ENCODE measurements at regions of chr16 and their contacts with region 1.

Region 1: DNA sequence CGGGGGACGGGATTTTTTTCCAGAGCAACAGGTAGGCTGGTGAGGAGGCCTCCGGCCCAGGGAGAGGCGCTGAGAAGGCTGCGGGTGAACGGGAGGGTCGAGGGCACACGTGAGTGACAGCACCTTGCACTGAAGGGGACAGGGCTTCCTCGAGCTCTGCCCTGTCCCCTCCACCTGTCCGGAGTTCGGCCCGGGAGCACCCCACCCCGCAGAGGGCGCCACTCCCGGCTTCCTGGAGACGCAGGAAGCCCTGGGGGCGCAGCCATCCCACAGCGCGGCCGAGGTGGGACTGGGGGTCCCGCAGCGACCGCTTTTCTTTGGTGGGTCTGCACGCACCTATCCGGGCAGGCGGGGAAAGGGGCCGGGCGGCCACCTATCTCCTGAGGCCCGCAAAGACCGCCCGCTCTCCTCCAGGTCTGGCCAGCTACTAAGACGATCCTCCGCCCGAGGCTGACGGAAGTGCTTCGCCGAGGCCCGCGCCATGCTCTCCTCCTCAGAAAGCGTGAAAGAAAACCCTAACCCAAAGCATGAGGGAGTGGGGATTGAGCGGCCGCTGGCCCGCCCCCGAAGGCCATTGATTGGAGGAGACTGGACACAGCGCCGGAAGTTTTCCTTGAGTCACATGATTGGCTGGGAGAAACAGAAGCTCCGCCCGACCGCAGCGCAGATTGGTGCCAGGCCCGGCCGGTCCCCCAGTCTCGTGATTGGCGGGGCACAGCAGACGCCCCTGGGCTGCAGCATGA is 34.3 kb downstream of the DDX19A start:
- DNase-seq: peak; percentile 97 to 100 (median 98)

Region 2: GRCh38 chr16:70416748-70417616 is 36.0 kb after region 1 on chr16:
- intact Hi-C with region 1: no loop called
- DNase-seq: no peak

Region 3: DNA sequence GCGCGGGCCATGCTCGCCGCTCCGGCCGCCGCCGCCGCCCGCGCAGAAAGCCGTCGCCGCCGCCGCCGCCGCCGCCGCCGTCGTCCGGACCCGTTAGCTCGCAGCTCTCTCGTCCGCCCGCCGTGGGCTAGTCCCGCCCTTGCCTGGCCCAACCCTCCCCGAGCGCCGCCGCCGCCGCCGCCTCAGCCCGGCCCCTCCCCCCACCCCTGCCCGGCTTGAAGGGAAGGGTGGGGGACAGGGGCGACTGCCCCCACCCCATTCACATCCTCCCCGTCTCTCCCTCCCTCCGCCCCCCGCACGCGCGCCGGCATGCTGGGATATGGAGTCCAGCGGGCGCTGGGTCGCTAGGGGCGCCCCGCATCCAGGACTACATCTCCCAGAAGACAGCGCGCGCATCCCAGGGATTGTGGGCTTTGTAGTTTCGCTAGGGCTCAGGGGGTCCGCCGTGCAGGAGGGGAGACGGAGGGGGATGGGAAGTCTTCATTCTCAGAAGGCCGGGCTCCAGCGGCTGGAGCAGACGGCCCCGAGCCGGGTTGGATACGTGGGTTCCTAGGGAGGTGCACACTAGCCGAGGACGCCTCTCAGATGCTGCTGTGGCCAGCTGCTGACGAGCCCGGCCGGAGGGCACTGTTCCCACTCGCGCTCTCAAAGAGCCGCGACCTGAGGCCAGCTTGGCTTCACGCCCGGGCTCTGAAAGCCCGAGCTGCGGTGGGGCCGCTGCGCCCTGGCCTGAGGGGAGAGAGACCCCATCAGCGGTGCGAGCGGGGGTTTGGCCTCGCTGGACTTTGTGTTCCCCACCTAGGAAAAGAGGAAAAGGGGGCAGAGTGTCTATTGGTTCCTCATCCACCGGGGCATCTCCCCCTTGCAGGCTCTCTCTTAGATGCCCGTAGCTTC is 58.2 kb after region 1 on chr16 and contains the start of gene ST3GAL2:
- intact Hi-C with region 1: loop called (anchors 2 kb)
- DNase-seq: peak; percentile 92 to 99 (median 96)

Region 4: GRCh38 chr16:70454222-70455034 is 73.4 kb after region 1 on chr16 and contains the start of gene FCSK:
- intact Hi-C with region 1: loop called (anchors 5 kb)
- DNase-seq: peak; percentile 57 to 95 (median 70)

Region 5: DNA sequence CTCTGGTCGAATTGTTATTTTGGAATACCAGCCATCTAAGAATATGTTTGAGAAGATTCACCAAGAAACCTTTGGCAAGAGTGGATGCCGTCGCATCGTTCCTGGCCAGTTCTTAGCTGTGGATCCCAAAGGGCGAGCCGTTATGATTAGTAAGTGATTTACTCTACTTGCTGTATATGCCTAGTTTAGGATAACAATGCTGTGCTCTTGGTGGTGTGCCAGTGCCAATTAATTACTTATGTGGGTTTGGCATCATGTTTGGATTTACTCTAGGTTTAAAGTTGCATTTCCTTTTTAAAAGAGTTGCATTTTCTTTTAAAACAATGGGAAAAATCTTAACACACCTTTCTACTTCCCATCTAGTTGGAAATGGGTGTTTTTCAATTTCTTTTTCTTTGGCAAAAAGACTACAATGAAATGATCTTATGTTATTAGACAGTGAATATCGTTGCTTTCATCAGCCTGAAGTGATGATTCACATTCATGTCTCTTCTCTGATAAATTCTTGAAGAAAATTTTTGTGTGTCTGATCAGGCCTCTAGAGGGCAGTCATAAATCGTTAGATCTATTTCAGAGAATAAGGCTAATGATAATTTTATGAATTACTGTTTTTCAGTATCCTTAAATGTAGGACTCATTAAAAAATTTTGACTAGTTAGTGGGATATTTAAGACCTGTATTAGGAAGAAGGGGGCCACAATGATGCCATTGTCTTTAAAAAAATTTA is 148.2 kb after region 1 on chr16:
- intact Hi-C with region 1: loop called (anchors 5 kb)
- DNase-seq: no peak

Region 6: DNA sequence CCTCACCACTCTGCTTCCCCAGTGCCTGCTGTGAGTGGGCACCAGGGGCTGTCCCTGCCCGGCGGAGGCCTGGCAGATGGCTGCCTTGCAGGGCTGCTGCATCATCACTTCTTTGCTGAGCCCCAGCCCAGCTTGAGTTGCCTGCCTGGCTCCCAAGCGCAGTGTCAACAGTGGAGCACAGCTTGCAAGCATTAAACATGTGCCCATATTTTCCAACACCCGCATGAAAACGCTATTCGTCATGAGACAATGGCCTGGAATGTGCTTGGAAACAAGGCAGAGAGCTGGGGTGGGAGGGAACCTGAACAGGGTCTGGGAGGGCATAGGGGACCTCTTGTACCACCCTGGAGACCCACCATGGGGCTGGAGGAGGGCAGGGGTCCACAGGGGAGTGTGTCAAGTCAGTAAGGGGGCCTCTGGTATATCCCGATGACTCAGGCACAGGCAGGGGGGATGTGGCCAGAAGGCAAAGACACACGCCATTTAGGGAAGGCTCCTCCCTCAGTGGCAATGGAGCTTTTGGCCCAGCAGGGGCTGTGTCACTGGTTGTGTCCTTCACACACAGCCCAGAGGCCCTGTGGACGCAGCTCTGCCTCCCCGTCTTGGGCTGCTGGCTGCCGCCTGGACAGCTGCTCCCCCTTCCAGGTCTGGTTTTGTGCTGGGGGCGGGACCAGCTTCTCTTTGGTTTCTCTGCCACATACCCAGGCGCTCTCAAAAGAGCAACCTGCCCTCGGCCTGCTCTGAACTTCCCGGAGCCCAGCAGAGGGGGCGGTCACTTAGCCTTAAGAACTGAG is 322.2 kb after region 1 on chr16:
- intact Hi-C with region 1: no loop called
- DNase-seq: peak in 8 of 10 donors; percentile 67 to 97 (median 83)

Measured in posterior cingulate gyrus (tissue), 11 donors.